Heart left ventricle (tissue), 16 donors: ENCODE measurements at regions of chr6 and their contacts with region 1.

Region 1: GRCh38 chr6:15245361-15246216 is at the start of gene JARID2:
- DNase-seq: peak; percentile 99 to 100 (median 99)
- ATAC-seq: peak; percentile 81 to 91 (median 90)
- H3K4me3 ChIP-seq: peak within 1 kb of the TSS; percentile 54 to 92 (median 82)
- H3K27ac ChIP-seq: peak within 1 kb of the TSS; percentile 76 to 98 (median 95)
- H3K4me1 ChIP-seq: peaks cover 0 to 38% (median 12%) of the 10 kb centered on the region in 12 donors
- H3K27me3 ChIP-seq: no peaks in the 10 kb centered on the region
- CTCF ChIP-seq: no peak
- POLR2A ChIP-seq: peak; percentile 74 to 95
- total RNA-seq, gene JARID2: 6.0 to 12.2 (median 8.5) TPM

Region 2: GRCh38 chr6:14423330-14423729 is 822.3 kb before region 1 on chr6:
- intact Hi-C with region 1: loop called in 1 of 10 experiments (anchors 5 kb)
- DNase-seq: peak in 4 of 5 donors; percentile 51 to 74 (median 55)
- ATAC-seq: peak; percentile 89 to 97 (median 92)
- H3K4me3 ChIP-seq: no peak overlapping the region
- H3K27ac ChIP-seq: peak overlapping the region in 9 of 12 donors; percentile 29 to 73 (median 51)
- H3K4me1 ChIP-seq: peaks cover 0 to 20% (median 6%) of the 10 kb centered on the region in 12 donors
- H3K27me3 ChIP-seq: no peaks in the 10 kb centered on the region
- CTCF ChIP-seq: no peak
- POLR2A ChIP-seq: no peak

Region 3: DNA sequence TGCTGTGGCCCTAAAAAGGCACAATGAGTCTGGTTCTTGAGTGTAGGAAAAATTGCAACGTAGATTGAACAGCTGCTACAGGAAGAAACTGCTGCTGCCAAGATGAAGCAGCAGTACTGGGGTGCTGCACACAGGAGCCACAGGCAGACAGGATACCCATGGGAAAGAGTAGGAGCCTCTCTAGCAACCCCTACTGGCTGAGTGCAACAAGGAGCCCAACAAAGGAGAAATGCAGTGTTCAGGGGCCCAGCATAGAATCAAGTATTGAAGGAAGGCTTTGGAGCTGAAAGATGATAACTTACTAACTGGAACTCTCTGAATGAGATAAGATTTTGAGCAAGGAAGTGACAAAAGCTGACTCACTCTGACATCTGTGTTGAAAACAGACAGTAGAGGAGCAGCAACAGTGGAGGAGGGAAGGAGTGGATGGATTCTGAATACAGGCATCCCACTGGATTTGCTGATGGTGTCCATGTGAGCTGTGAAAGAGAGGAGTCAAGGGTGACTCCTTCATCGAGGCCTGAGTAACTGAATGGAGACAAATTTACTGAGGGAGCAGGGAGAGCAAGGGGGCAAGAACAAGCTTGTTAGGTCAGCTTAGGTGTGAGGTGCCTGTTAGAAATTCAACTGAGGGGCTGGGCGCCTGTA is 534.4 kb before region 1 on chr6:
- intact Hi-C with region 1: loop called in 2 of 10 experiments (anchors 10 kb)
- DNase-seq: peak in 3 of 5 donors; percentile 48 to 55 (median 49)
- ATAC-seq: peak in 2 of 4 donors; percentile 35 to 60
- H3K4me3 ChIP-seq: no peak overlapping the region
- H3K27ac ChIP-seq: peak overlapping the region in 4 of 12 donors; percentile 4 to 56 (median 20)
- H3K4me1 ChIP-seq: peaks cover 0 to 52% (median 26%) of the 10 kb centered on the region in 12 donors
- H3K27me3 ChIP-seq: no peaks in the 10 kb centered on the region
- CTCF ChIP-seq: peak in 11 of 12 donors; percentile 24 to 63 (median 45)
- POLR2A ChIP-seq: no peak

Region 4: DNA sequence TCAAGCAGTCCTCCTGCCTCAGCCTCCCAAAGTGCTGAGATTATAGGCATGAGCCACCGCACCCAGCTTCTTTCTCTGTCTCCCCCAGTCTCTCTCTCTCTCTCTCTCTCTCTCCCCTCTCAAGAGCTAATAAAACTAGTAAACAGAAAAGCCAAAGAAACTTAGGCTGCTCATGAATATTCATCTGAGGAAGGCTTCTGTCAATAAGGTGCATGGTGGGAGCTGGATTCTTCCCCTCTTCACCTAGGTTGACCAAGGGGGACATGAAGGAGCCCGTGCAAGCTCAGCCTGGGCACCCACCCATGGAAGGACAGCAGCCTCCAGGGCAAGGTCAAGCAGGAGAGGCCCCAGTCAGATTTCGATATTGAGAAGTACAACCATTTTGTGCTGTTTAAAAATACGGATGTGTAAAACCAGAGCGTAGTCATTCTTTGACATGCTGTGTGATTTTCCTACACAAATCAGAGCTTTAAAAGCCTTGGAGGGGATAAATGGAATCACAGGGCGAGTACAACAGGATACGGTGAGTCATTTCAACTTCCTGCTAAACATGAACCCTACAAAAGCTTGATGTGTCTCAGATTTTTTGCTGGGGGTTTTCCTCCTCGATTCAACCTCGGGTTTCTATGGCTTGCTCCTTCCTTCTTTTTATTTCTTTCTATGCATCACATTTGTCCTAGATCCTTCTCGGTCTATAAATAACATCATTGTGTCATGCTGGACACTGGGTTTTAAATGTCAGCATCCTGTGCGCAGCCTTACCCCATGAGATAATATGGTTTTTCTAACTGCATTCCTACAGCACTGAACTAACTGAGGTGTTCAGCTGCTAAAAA is 368.6 kb before region 1 on chr6:
- intact Hi-C with region 1: loop called in 6 of 10 experiments (anchors 5 to 10 kb)
- DNase-seq: peak in 1 of 5 donors; percentile 37
- ATAC-seq: peak; percentile 86 to 94 (median 90)
- H3K4me3 ChIP-seq: no peak overlapping the region
- H3K27ac ChIP-seq: peak overlapping the region; percentile 63 to 91 (median 75)
- H3K4me1 ChIP-seq: peaks cover 4 to 63% (median 34%) of the 10 kb centered on the region in 12 donors
- H3K27me3 ChIP-seq: no peaks in the 10 kb centered on the region
- CTCF ChIP-seq: no peak
- POLR2A ChIP-seq: no peak

Region 5: GRCh38 chr6:15389765-15390723 is 144.5 kb after region 1 on chr6:
- intact Hi-C with region 1: loop called in 6 of 10 experiments (anchors 2 to 10 kb)
- DNase-seq: no peak
- ATAC-seq: peak; percentile 4 to 60 (median 53)
- H3K4me3 ChIP-seq: peak overlapping the region in 1 of 12 donors; percentile 0
- H3K27ac ChIP-seq: peak overlapping the region in 10 of 12 donors; percentile 1 to 70 (median 43)
- H3K4me1 ChIP-seq: peaks cover 0 to 68% (median 44%) of the 10 kb centered on the region in 12 donors
- H3K27me3 ChIP-seq: no peaks in the 10 kb centered on the region
- CTCF ChIP-seq: peak; percentile 42 to 78 (median 64)
- POLR2A ChIP-seq: no peak

Region 6: DNA sequence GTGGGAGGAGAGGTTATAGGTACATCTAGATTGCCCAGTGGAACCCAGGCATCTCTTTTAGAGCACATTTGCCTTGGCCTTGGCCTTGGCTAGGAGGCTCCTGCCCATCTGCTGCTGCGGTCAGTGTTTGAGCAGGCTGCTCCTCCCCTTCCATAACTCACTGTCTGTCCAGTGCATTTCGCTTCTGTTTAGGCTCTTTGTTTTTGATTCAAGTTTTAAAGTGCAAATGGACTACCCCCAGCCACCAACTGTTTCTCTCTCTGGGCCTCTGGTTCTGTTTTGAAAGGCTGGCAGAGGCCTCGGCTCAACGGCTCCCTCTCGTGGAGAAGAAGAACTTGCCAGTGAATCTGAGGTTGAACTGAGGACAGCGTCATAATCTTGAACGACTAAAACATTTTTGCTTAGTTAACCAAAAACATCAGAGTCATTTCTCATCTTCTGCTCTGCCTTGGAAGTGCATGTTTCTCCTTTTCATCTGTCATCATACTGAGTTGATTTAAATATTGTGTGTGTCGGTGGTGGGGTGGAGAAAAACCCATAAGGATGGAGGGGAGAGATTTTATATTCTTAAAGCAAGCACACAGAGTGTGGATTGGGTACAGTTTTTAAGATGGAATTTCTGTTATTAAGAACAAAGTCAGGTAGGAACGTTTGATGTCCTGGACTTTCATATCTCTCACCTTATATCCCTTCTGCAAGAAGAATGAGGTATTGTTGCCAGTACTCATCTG is 245.8 kb after region 1 on chr6:
- intact Hi-C with region 1: loop called in 7 of 10 experiments (anchors 5 to 10 kb)
- DNase-seq: peak in 4 of 5 donors; percentile 71 to 81 (median 80)
- ATAC-seq: peak; percentile 43 to 69 (median 62)
- H3K4me3 ChIP-seq: no peak overlapping the region
- H3K27ac ChIP-seq: peak overlapping the region in 7 of 12 donors; percentile 14 to 58 (median 32)
- H3K4me1 ChIP-seq: peaks cover 0 to 47% (median 30%) of the 10 kb centered on the region in 12 donors
- H3K27me3 ChIP-seq: no peaks in the 10 kb centered on the region
- CTCF ChIP-seq: peak; percentile 89 to 98 (median 96)
- POLR2A ChIP-seq: no peak